Activated CD8-positive, alpha-beta T cell treated with anti-CD3 and anti-CD28 coated beads for 36 hours (primary cell): ENCODE measurements at regions of chr5 and their contacts with region 1.

Region 1: GRCh38 chr5:148740966-148741742 is 85.3 kb upstream of the ADRB2 start:
- DNase-seq: no peak
- ATAC-seq: peak; percentile 55
- H3K4me3 Mint-ChIP-seq: no peak overlapping the region
- H3K27ac Mint-ChIP-seq: no peak overlapping the region
- H3K4me1 Mint-ChIP-seq: no peaks in the 10 kb centered on the region
- H3K27me3 Mint-ChIP-seq: peaks cover 15% of the 10 kb centered on the region
- CTCF ChIP-seq: peak; percentile 76

Region 2: GRCh38 chr5:148791334-148791667 is 50.1 kb after region 1 on chr5:
- CTCF ChIA-PET with region 1: interaction called, 20 read pairs
- POLR2A ChIA-PET with region 1: no interaction called
- intact Hi-C with region 1: no loop called
- DNase-seq: peak; percentile 76
- ATAC-seq: peak; percentile 91
- H3K4me3 Mint-ChIP-seq: no peak overlapping the region
- H3K27ac Mint-ChIP-seq: peak overlapping the region; percentile 39
- H3K4me1 Mint-ChIP-seq: peaks cover 34% of the 10 kb centered on the region
- H3K27me3 Mint-ChIP-seq: peaks cover 36% of the 10 kb centered on the region
- CTCF ChIP-seq: no peak

Region 3: GRCh38 chr5:148820461-148821395 is 79.6 kb after region 1 on chr5:
- CTCF ChIA-PET with region 1: interaction called, 10 read pairs
- POLR2A ChIA-PET with region 1: no interaction called
- intact Hi-C with region 1: loop called (anchors 5 kb)
- DNase-seq: no peak
- ATAC-seq: peak; percentile 53
- H3K4me3 Mint-ChIP-seq: no peak overlapping the region
- H3K27ac Mint-ChIP-seq: no peak overlapping the region
- H3K4me1 Mint-ChIP-seq: peaks cover 4% of the 10 kb centered on the region
- H3K27me3 Mint-ChIP-seq: peaks cover 5% of the 10 kb centered on the region
- CTCF ChIP-seq: peak; percentile 65

Region 4: GRCh38 chr5:148831590-148832565 is 90.7 kb after region 1 on chr5:
- CTCF ChIA-PET with region 1: interaction called, 25 read pairs
- POLR2A ChIA-PET with region 1: no interaction called
- intact Hi-C with region 1: loop called (anchors 5 kb)
- DNase-seq: no peak
- ATAC-seq: no peak
- H3K4me3 Mint-ChIP-seq: peak overlapping the region; percentile 0
- H3K27ac Mint-ChIP-seq: peak overlapping the region; percentile 46
- H3K4me1 Mint-ChIP-seq: peaks cover 51% of the 10 kb centered on the region
- H3K27me3 Mint-ChIP-seq: peaks cover 6% of the 10 kb centered on the region
- CTCF ChIP-seq: no peak

Region 5: DNA sequence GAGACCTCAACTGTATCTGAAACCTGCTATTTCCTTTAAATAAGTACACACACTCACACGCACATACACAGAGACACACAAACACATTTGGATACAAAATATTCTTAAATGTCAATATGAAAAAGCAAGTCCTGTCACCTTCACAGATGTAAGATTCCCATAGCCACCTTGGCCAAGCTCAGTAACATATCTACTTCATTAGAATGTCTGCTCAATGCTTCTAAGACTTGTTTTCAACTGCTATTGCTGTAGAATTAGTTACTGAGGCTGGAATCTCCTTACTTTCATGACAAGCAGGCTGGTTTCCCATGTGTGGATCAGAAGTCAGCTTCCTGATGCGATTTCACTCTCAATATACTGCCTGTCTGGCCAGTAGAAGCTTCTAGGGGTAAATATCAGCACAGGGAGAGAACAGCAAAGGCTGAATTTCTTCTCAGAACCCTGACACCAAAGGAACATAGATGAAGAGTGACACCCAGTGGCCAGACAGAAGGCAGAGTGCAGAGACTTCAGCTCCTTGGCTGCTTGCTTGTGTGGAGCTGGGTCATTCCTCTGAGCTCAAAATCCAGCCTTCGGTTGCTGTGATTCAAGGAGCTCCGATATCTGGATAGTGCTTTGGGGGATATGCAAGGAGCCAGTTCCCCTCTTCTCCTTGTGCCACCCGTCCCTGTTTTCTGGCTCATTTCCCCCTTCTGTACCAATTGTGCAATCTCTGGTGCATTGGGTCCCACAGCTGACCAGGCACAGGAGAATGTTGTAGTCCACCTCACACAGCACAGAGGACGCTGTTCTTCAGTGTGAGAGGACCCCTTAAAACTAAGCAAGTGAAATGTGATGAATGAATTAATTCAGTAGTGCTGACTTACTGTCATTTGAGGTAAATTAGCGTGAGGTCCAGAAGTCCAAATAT is 373.5 kb after region 1 on chr5:
- CTCF ChIA-PET with region 1: interaction called, 19 read pairs
- POLR2A ChIA-PET with region 1: no interaction called
- intact Hi-C with region 1: no loop called
- DNase-seq: peak; percentile 58
- ATAC-seq: peak; percentile 64
- H3K4me3 Mint-ChIP-seq: no peak overlapping the region
- H3K27ac Mint-ChIP-seq: no peak overlapping the region
- H3K4me1 Mint-ChIP-seq: no peaks in the 10 kb centered on the region
- H3K27me3 Mint-ChIP-seq: peaks cover 18% of the 10 kb centered on the region
- CTCF ChIP-seq: peak; percentile 60